ENCODE measurements at regions of chr14 and their contacts with region 1.

Region 1: GRCh38 chr14:52131640-52132320 is 62.9 kb upstream of the NID2 start:
- DNase-seq: peak; percentile 87
- ATAC-seq: peak; percentile 98
- H3K4me3 ChIP-seq: no peak overlapping the region
- H3K27ac ChIP-seq: no peak overlapping the region
- H3K4me1 ChIP-seq: peaks cover 0 to 5% of the 10 kb centered on the region in 2 experiments; a peak in 1 of 4 replicates
- H3K27me3 ChIP-seq: no peaks in the 10 kb centered on the region
- CTCF ChIP-seq: peak; percentile 67 to 73 (median 71)
- POLR2A ChIP-seq: no peak
- RAD21 ChIP-seq: peak; percentile 77

Region 2: GRCh38 chr14:51954657-51955056 is 177.1 kb before region 1 on chr14:
- CTCF ChIA-PET with region 1: no interaction called
- POLR2A ChIA-PET with region 1: no interaction called
- RAD21 ChIA-PET with region 1: no interaction called
- intact Hi-C with region 1: no loop called
- DNase-seq: no peak
- ATAC-seq: no peak
- H3K4me3 ChIP-seq: no peak overlapping the region
- H3K27ac ChIP-seq: no peak overlapping the region
- H3K4me1 ChIP-seq: no peaks in the 10 kb centered on the region; a peak in 1 of 4 replicates
- H3K27me3 ChIP-seq: no peaks in the 10 kb centered on the region
- CTCF ChIP-seq: 0 out of 6 replicates have a peak, but pooled peaks of 2 of the 3 experiments have one; percentile 3 to 9
- POLR2A ChIP-seq: no peak
- RAD21 ChIP-seq: peak; percentile 22; the same call in 1 of the 2 replicates

Region 3: DNA sequence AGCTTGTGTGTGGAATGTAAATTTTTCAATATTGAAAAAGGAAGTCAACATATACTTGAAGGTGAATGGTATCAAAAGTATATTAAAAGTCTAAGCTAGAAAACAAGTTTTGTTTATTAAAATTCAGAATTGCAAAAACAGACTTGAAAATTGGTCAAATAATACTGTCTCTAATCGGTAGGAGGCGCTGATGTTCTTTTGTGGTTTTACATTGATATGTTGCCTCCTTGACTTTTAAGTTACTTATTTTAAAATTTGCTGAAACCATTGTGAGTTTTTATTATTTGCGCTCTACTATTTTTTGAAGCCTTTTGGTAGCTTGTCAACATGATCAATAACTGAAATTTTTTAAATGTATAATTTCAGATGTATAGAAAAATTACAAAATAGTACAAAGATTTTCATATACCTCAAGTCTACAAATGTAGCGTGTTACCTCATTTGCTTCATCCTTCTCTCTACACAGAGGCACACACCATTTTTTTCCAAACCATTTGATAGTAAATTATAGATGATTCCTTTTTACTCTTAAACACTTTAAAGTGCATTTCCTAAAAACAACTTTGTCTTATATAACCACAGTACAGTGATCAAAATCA is 135.5 kb before region 1 on chr14:
- CTCF ChIA-PET with region 1: interaction called, 3 read pairs
- POLR2A ChIA-PET with region 1: no interaction called
- RAD21 ChIA-PET with region 1: no interaction called
- intact Hi-C with region 1: loop called (anchors 1 kb)
- DNase-seq: no peak
- ATAC-seq: no peak
- H3K4me3 ChIP-seq: no peak overlapping the region
- H3K27ac ChIP-seq: no peak overlapping the region
- H3K4me1 ChIP-seq: no peaks in the 10 kb centered on the region
- H3K27me3 ChIP-seq: no peaks in the 10 kb centered on the region
- CTCF ChIP-seq: peak in 2 of 3 experiments; percentile 27 to 61; a peak in 3 of 6 replicates
- POLR2A ChIP-seq: no peak
- RAD21 ChIP-seq: peak; percentile 37; the same call in 1 of the 2 replicates

Region 4: GRCh38 chr14:52043690-52044089 is 88.1 kb before region 1 on chr14:
- CTCF ChIA-PET with region 1: interaction called, 4 read pairs
- POLR2A ChIA-PET with region 1: no interaction called
- RAD21 ChIA-PET with region 1: no interaction called
- intact Hi-C with region 1: loop called (anchors 1 kb)
- DNase-seq: peak; percentile 50
- ATAC-seq: peak; percentile 100
- H3K4me3 ChIP-seq: no peak overlapping the region
- H3K27ac ChIP-seq: no peak overlapping the region
- H3K4me1 ChIP-seq: peaks cover 0 to 13% of the 10 kb centered on the region in 2 experiments; a peak in 1 of 4 replicates
- H3K27me3 ChIP-seq: no peaks in the 10 kb centered on the region
- CTCF ChIP-seq: peak; percentile 58 to 82 (median 73); a peak in 5 of 6 replicates
- POLR2A ChIP-seq: no peak
- RAD21 ChIP-seq: peak; percentile 57

Measured in HCT116 (cell line).